Activated naive CD8-positive, alpha-beta T cell treated with anti-CD3 and anti-CD28 coated beads, Interleukin-2, amount 10 ng/mL, durations not matched to agents 7 days and 5 days (primary cell): ENCODE measurements at regions of chr11 and their contacts with region 1.

Region 1: DNA sequence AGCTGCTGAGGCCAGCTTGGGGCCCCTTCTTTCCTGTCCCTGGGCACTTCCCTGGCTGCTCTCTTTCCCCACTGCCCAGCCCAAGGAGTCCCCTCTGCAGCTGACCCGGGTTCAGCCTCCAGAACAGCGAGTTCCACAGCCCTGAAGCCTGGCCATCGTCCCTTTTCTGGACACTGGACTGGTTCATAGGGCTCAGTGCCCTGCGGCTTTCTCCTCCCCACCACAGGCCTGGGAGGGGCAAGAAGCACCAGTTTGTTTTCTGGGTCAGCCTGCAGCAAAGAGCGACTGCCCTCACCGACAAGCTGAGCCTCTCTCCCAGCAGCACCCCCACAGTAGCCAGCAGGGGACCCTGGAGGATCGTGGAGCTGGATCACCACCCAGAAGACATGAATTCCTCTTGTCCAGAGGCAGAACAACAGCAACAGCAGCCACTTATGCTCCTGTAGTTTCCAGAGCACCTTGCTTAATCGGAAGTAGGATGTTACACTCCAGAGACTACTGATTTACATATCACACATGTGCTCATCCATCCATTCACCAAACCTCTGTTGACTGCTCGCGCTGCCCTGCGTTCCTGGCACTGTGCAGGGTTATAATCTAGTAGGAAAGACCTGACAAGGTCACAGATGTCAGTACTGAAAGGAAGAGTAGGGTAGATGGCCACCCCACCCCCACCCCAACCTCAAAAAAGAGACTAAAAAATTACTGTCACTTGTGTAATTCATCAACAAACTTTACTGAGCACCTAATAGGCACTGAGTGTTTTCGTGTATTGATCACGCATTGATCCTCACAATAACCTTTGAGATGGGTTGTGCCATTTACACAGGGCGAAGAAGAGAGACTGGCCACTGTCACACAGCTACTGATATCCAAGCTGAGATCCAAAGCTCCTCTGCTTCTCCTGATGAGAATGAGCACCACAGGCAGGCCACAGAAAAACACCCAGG is 13.0 kb upstream of the CXCR5 start:
- DNase-seq: no peak
- ATAC-seq: peak; percentile 56
- H3K4me3 Mint-ChIP-seq: peak overlapping the region; percentile 82
- H3K27ac Mint-ChIP-seq: peak overlapping the region; percentile 93
- H3K4me1 Mint-ChIP-seq: peaks cover 39% of the 10 kb centered on the region
- H3K27me3 Mint-ChIP-seq: no peaks in the 10 kb centered on the region

Region 2: DNA sequence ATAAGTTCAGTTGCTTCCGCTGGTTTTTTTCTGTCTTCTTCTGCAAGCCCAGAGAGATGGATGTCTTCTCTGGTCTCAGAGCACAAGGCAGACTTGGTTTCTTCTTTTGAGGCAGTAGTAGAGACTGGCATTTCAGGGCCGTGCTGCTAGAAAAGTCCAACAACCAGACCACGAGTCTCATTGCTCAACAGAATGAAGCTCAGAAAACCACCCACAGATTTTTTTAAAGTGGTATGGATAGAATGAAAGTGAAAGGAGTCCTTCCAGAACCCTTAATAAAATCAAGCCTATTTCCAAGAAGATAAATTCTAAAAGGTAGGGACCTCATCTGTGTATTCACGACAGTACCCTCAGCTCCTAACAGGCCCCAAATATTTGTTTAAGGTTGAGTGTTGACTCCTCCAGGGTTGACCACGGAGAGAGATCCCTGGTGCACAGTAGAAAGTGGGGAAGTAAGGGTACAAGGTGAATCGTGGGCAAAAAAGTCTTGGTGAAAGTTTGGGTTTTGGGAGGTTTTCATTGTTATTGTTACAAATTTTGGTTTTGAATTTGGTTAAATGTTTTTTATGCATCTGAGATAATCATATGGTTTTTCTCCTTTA is 36.1 kb before region 1 on chr11:
- POLR2A ChIA-PET with region 1: interaction called, 11 read pairs
- DNase-seq: no peak
- ATAC-seq: peak; percentile 79
- H3K4me3 Mint-ChIP-seq: peak overlapping the region; percentile 60
- H3K27ac Mint-ChIP-seq: peak overlapping the region; percentile 69
- H3K4me1 Mint-ChIP-seq: peaks cover 14% of the 10 kb centered on the region
- H3K27me3 Mint-ChIP-seq: no peaks in the 10 kb centered on the region

Region 3: DNA sequence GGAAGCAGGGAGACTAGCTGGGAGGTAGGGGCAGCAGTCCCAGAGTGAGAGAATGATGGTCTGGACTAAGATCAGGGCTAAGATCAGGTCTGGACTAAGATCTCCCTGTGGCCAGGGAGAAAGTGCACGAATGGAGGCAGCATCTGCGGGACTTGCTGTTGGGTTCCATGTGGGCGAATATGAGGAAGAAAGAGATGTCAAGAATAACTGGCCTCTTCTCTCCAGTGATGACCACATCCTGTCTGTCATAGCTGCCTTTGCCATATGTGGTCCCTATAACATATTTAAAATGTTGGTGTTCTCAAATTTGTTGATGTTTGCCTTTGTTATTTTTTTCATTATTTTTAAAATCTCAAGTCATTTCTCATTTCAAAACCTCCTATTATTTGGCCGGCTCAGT is 14.4 kb before region 1 on chr11:
- POLR2A ChIA-PET with region 1: interaction called, 11 read pairs
- DNase-seq: no peak
- ATAC-seq: no peak
- H3K4me3 Mint-ChIP-seq: no peak overlapping the region
- H3K27ac Mint-ChIP-seq: peak overlapping the region; percentile 25
- H3K4me1 Mint-ChIP-seq: peaks cover 24% of the 10 kb centered on the region
- H3K27me3 Mint-ChIP-seq: no peaks in the 10 kb centered on the region

Region 4: DNA sequence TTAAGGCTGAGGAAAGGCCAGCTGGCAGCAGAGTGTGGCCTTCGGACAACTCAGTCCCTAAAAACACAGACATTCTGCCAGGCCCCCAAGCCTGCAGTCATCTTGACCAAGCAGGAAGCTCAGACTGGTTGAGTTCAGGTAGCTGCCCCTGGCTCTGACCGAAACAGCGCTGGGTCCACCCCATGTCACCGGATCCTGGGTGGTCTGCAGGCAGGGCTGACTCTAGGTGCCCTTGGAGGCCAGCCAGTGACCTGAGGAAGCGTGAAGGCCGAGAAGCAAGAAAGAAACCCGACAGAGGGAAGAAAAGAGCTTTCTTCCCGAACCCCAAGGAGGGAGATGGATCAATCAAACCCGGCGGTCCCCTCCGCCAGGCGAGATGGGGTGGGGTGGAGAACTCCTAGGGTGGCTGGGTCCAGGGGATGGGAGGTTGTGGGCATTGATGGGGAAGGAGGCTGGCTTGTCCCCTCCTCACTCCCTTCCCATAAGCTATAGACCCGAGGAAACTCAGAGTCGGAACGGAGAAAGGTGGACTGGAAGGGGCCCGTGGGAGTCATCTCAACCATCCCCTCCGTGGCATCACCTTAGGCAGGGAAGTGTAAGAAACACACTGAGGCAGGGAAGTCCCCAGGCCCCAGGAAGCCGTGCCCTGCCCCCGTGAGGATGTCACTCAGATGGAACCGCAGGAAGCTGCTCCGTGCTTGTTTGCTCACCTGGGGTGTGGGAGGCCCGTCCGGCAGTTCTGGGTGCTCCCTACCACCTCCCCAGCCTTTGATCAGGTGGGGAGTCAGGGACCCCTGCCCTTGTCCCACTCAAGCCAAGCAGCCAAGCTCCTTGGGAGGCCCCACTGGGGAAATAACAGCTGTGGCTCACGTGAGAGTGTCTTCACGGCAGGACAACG is 24.7 kb after region 1 on chr11:
- POLR2A ChIA-PET with region 1: interaction called, 54 read pairs
- DNase-seq: peak; percentile 77
- ATAC-seq: peak; percentile 80
- H3K4me3 Mint-ChIP-seq: peak overlapping the region; percentile 69
- H3K27ac Mint-ChIP-seq: peak overlapping the region; percentile 88
- H3K4me1 Mint-ChIP-seq: peaks cover 52% of the 10 kb centered on the region
- H3K27me3 Mint-ChIP-seq: no peaks in the 10 kb centered on the region